Activated CD8-positive, alpha-beta T cell treated with anti-CD3 and anti-CD28 coated beads, Interleukin-2, amount 10 ng/mL, durations not matched to agents 7 days and 5 days (primary cell): ENCODE measurements at regions of chr3 and their contacts with region 1.

Region 1: GRCh38 chr3:10273702-10274305 is 18.9 kb downstream of the GHRL start:
- DNase-seq: no peak
- ATAC-seq: no peak
- H3K4me3 Mint-ChIP-seq: no peak overlapping the region
- H3K27ac Mint-ChIP-seq: no peak overlapping the region
- H3K4me1 Mint-ChIP-seq: peaks cover 37% of the 10 kb centered on the region
- H3K27me3 Mint-ChIP-seq: no peaks in the 10 kb centered on the region

Region 2: GRCh38 chr3:10286596-10287330 is 13.0 kb after region 1 on chr3:
- CTCF ChIA-PET with region 1: interaction called, 18 read pairs
- POLR2A ChIA-PET with region 1: interaction called, 3 read pairs
- DNase-seq: peak; percentile 62
- ATAC-seq: peak; percentile 61
- H3K4me3 Mint-ChIP-seq: no peak overlapping the region
- H3K27ac Mint-ChIP-seq: peak overlapping the region; percentile 4
- H3K4me1 Mint-ChIP-seq: peaks cover 20% of the 10 kb centered on the region
- H3K27me3 Mint-ChIP-seq: no peaks in the 10 kb centered on the region